Endothelial cell of umbilical vein (primary cell): ENCODE measurements at regions of chr2 and their contacts with region 1.

Region 1: DNA sequence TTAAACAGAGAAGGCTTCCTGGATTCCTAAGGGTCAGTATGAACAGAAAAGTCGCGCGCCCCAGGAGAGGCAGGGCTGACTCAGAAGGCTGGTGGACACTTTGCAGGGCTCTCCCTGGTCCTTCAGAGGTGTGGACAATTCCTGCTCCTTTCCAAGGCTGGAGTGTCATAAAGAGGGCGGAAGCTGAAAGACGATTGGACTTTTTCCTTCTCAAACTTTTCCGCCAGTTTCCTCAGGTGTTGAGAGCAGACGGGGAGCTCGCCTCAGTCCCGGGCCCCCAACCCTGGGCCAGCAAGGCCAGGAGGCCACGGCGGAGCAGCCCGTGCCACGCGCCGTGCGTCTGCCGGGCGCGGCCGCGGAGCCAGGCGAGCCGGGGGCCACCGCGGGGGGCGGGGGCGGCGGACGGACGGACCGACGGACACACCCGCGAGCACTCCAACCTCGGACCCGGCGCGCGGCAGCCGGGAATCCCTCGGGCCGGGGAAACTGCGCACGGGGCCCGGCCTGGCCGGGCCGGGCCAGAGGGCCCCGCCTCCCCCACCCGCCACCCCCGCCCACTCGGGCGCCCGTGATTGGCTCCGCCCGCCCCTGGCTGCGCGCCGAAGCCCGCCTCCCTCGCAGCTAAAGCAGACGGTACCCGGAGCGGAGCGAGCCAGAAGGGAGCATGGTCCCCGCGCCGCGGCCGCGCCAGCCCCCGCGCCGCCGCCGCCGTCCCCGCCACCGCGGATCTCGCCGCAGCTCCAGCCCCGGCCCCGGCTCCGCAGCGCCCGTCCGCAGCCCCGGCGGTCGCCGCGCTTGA is at the start of gene KLHL29:
- DNase-seq: peak; percentile 50
- H3K4me3 ChIP-seq: peak within 1 kb of the TSS; percentile 61 to 91 (median 80)
- H3K27ac ChIP-seq: no peak within 1 kb of the TSS
- H3K4me1 ChIP-seq: peaks cover 28% of the 10 kb centered on the region
- H3K27me3 ChIP-seq: peaks cover 0 to 8% of the 10 kb centered on the region in 2 experiments
- CTCF ChIP-seq: no peak
- POLR2A ChIP-seq: peak; percentile 59
- total RNA-seq, gene KLHL29: 10.6 and 12.7 TPM in 2 replicates

Region 2: DNA sequence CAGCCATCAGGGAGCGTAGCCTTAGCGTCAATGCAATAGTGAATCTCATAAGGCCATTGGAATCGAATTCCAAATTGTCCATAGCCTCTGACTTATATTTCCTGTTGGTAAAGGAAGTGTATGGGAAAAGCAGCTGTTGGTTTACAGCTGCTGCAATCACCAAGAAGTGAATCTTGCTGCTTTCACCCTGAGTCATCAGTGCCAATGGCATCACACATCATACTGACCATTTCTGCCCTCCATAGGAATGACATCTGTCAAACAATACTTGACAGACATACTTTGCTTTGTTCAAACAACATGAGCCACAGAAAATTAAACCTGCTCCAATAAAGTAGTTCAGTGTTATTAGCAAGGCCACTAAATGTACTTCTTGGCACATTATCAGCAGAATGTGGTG is 111.0 kb before region 1 on chr2:
- CTCF ChIA-PET with region 1: no interaction called
- POLR2A ChIA-PET with region 1: no interaction called
- dilution Hi-C with region 1: no loop called
- intact Hi-C with region 1: no loop called
- DNase-seq: no peak
- H3K4me3 ChIP-seq: no peak overlapping the region
- H3K27ac ChIP-seq: no peak overlapping the region
- H3K4me1 ChIP-seq: no peaks in the 10 kb centered on the region
- H3K27me3 ChIP-seq: no peaks in the 10 kb centered on the region
- CTCF ChIP-seq: no peak
- POLR2A ChIP-seq: no peak

Region 3: DNA sequence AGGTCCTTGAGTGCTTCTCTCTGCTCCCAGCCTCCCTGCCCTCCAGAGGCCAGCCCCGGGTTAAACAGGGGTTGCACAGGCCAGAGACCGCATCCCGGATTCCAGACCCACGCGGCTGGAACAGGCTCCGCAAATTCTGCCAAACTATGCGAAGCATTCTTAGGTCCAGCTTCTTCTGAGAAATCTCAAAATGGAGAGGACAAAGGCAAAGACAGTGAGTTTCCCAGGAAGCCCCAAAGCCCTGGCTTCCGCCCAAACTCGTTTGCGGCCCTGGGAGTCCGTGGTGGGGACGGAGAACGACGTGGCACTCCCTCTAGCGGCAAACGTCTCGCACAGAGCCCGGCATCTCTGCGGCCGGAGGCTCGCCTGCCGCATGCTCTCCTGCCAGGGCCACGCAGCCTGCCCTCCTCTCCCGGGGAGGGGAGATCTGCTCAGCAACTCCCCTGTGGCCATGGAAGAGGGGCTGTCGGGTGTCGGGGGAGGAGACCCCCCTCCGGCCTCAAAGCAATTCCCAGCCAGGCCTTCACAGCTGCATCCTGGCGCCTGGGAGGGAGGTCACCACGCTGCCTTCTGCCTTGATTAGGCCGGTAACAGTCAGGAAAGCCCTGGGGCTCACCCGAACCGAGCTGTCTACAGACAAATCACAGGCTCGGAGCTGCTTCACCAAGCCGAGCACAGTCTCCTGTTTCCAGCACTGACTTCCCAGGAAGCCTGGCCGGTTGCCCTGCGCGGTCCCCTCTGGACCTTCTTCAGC is 33.2 kb before region 1 on chr2:
- CTCF ChIA-PET with region 1: interaction called, 7 read pairs
- POLR2A ChIA-PET with region 1: no interaction called
- dilution Hi-C with region 1: no loop called
- intact Hi-C with region 1: loop called (anchors 1 kb)
- DNase-seq: peak; percentile 74
- H3K4me3 ChIP-seq: no peak overlapping the region
- H3K27ac ChIP-seq: no peak overlapping the region
- H3K4me1 ChIP-seq: peaks cover 2% of the 10 kb centered on the region
- H3K27me3 ChIP-seq: no peaks in the 10 kb centered on the region
- CTCF ChIP-seq: peak; percentile 88 to 96
- POLR2A ChIP-seq: no peak

Region 4: GRCh38 chr2:23404426-23404825 is 19.7 kb after region 1 on chr2:
- CTCF ChIA-PET with region 1: interaction called, 8 read pairs
- POLR2A ChIA-PET with region 1: no interaction called
- dilution Hi-C with region 1: no loop called
- intact Hi-C with region 1: loop called (anchors 1 kb)
- DNase-seq: peak; percentile 80
- H3K4me3 ChIP-seq: no peak overlapping the region
- H3K27ac ChIP-seq: no peak overlapping the region
- H3K4me1 ChIP-seq: peaks cover 12% of the 10 kb centered on the region
- H3K27me3 ChIP-seq: no peaks in the 10 kb centered on the region
- CTCF ChIP-seq: peak in 1 of 2 donors; percentile 25
- POLR2A ChIP-seq: no peak

Region 5: GRCh38 chr2:23414871-23415270 is 30.1 kb after region 1 on chr2:
- CTCF ChIA-PET with region 1: no interaction called
- POLR2A ChIA-PET with region 1: no interaction called
- dilution Hi-C with region 1: no loop called
- intact Hi-C with region 1: no loop called
- DNase-seq: no peak
- H3K4me3 ChIP-seq: no peak overlapping the region
- H3K27ac ChIP-seq: no peak overlapping the region
- H3K4me1 ChIP-seq: no peaks in the 10 kb centered on the region
- H3K27me3 ChIP-seq: no peaks in the 10 kb centered on the region
- CTCF ChIP-seq: peak in 1 of 2 donors; percentile 16
- POLR2A ChIP-seq: no peak

Region 6: GRCh38 chr2:23545396-23545795 is 160.6 kb after region 1 on chr2:
- CTCF ChIA-PET with region 1: interaction called, 3 read pairs
- POLR2A ChIA-PET with region 1: no interaction called
- dilution Hi-C with region 1: no loop called
- intact Hi-C with region 1: loop called (anchors 1 kb)
- DNase-seq: peak; percentile 56
- H3K4me3 ChIP-seq: no peak overlapping the region
- H3K27ac ChIP-seq: peak overlapping the region; percentile 73
- H3K4me1 ChIP-seq: peaks cover 33% of the 10 kb centered on the region
- H3K27me3 ChIP-seq: no peaks in the 10 kb centered on the region
- CTCF ChIP-seq: peak in 1 of 2 donors; percentile 36
- POLR2A ChIP-seq: peak; percentile 10

Region 7: DNA sequence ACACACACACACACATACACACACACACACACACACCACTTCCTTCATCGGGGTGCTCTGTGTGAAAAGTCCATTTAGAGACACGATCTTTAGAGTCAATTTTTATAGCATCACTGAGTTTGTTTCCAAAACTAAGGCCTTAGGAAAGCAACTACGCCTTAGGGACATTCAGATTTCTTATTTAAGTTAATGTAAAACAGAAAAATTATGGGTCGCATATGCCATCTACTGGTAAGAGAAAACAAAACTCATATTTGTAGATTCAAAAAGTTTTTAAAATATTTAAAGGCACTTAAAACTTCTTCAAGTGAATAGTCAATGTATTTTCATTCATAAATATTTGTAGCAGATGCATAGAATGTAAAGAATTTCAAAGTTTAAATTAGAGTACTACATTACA is 376.0 kb after region 1 on chr2:
- CTCF ChIA-PET with region 1: no interaction called
- POLR2A ChIA-PET with region 1: no interaction called
- dilution Hi-C with region 1: no loop called
- intact Hi-C with region 1: loop called (anchors 10 kb)
- DNase-seq: peak; percentile 44
- H3K4me3 ChIP-seq: no peak overlapping the region
- H3K27ac ChIP-seq: no peak overlapping the region
- H3K4me1 ChIP-seq: peaks cover 17% of the 10 kb centered on the region
- H3K27me3 ChIP-seq: no peaks in the 10 kb centered on the region
- CTCF ChIP-seq: no peak
- POLR2A ChIP-seq: no peak